ENCODE measurements at regions of chr16 and their contacts with region 1.

Region 1: GRCh38 chr16:23803591-23804123 is 32.1 kb upstream of the PRKCB start:
- DNase-seq: peak; percentile 57 to 92 (median 77)

Region 2: GRCh38 chr16:24010440-24011089 is 206.9 kb after region 1 on chr16:
- intact Hi-C with region 1: loop called (anchors 5 kb)
- DNase-seq: peak; percentile 61 to 93 (median 85)

Measured in head of caudate nucleus (tissue), 42 donors.